Heart right ventricle (tissue), 16 donors: ENCODE measurements at regions of chr16 and their contacts with region 1.

Region 1: GRCh38 chr16:80824718-80825364 is 20.4 kb upstream of the CDYL2 start:
- DNase-seq: no peak
- ATAC-seq: no peak
- H3K4me3 ChIP-seq: no peak overlapping the region
- H3K27ac ChIP-seq: no peak overlapping the region
- H3K4me1 ChIP-seq: no peaks in the 10 kb centered on the region
- H3K27me3 ChIP-seq: peaks cover 0 to 2% (median 0%) of the 10 kb centered on the region in 7 donors
- CTCF ChIP-seq: peak; percentile 20 to 84 (median 66)

Region 2: DNA sequence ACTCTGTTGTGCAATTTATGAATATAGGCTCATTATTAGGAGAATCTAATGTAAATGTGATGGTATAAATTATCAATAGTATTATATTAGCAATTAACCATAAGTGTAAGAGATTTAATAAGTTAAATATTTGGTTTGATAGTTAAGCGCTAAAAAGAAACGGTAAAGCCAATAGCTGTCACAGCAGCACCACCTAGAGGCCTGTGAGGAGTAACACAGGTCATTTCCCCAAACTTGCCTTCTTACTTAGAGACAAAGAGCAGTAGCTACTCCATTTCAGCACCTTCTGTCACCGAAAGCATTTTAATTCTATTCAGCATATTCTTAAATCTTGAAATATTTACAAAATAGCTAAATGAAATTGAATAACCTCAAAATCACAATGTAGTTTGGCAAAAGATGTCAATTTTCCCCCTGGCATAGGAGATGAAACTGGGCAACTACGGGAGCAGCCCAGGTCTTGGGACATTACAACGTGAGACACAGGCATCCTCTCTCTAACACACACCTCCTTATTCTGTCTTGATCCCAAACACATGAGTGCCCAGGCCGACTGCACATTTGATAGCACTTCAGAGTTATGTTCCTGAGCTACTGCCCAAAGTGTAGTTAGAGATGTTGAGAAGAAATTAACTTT is 298.3 kb before region 1 on chr16:
- intact Hi-C with region 1: loop called in 1 of 10 experiments (anchors 5 kb)
- DNase-seq: peak in 1 of 2 donors; percentile 41
- ATAC-seq: peak in 4 of 8 donors; percentile 37 to 61 (median 55)
- H3K4me3 ChIP-seq: no peak overlapping the region
- H3K27ac ChIP-seq: no peak overlapping the region
- H3K4me1 ChIP-seq: peaks cover 0 to 7% (median 0%) of the 10 kb centered on the region in 9 donors
- H3K27me3 ChIP-seq: peaks cover 0 to 16% (median 10%) of the 10 kb centered on the region in 7 donors
- CTCF ChIP-seq: peak; percentile 68 to 95 (median 88)